SK-N-SH (cell line): ENCODE measurements at regions of chr19 and their contacts with region 1.

Region 1: GRCh38 chr19:44770550-44771257 is 7.0 kb upstream of the CBLC start:
- DNase-seq: peak; percentile 94
- H3K4me3 ChIP-seq: no peak overlapping the region; a peak in 1 of 4 replicates
- H3K27ac ChIP-seq: no peak overlapping the region
- H3K4me1 ChIP-seq: peaks cover 0 to 6% of the 10 kb centered on the region in 2 experiments; a peak in 1 of 4 replicates
- H3K27me3 ChIP-seq: no peaks in the 10 kb centered on the region
- CTCF ChIP-seq: peak; percentile 87
- EP300 ChIP-seq: no peak
- RAD21 ChIP-seq: peak; percentile 94

Region 2: GRCh38 chr19:44683417-44684210 is 87.1 kb before region 1 on chr19:
- CTCF ChIA-PET with region 1: interaction called, 71 read pairs
- POLR2A ChIA-PET with region 1: no interaction called
- DNase-seq: no peak
- H3K4me3 ChIP-seq: no peak overlapping the region
- H3K27ac ChIP-seq: peak overlapping the region in 1 of 2 experiments; percentile 92; a peak in 1 of 4 replicates
- H3K4me1 ChIP-seq: peaks cover 0 to 6% of the 10 kb centered on the region in 2 experiments; a peak in 1 of 4 replicates
- H3K27me3 ChIP-seq: no peaks in the 10 kb centered on the region
- CTCF ChIP-seq: no peak
- EP300 ChIP-seq: no peak
- RAD21 ChIP-seq: no peak

Region 3: DNA sequence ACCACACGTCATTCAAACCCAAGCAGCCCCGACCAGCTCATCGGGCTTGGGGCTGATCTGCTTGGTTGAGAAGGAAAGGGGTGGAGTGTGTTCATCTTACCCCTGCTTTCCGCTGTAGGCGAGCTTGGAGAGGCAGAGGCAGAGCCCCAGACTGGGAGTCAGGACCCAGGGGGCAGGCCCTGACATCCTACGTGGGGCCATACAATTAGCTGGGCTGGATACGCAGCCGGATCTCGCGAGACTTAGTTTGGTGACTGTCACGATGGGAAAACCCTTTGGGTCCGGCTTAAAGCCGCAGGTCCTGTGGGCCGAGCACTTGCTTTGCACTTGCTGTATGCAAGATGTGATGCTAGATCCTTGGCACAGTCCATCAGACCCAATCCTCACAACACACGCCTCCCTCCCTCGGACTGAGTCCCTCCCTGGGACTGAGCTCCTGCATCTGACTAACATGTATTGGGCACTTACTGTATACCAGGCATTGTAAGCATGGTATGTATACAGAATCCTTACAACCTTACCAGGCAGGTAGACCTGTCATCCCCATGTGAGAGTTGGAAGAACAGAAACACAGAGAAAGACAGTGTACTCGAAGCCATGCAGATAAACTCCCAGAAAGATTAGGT is 68.0 kb before region 1 on chr19:
- CTCF ChIA-PET with region 1: interaction called, 13 read pairs
- POLR2A ChIA-PET with region 1: no interaction called
- DNase-seq: peak; percentile 52
- H3K4me3 ChIP-seq: no peak overlapping the region
- H3K27ac ChIP-seq: no peak overlapping the region
- H3K4me1 ChIP-seq: no peaks in the 10 kb centered on the region
- H3K27me3 ChIP-seq: no peaks in the 10 kb centered on the region
- CTCF ChIP-seq: no peak
- EP300 ChIP-seq: no peak
- RAD21 ChIP-seq: no peak

Region 4: GRCh38 chr19:44741841-44742352 is 28.8 kb before region 1 on chr19:
- CTCF ChIA-PET with region 1: interaction called, 24 read pairs
- POLR2A ChIA-PET with region 1: no interaction called
- DNase-seq: peak; percentile 65
- H3K4me3 ChIP-seq: no peak overlapping the region
- H3K27ac ChIP-seq: peak overlapping the region; percentile 36 to 94
- H3K4me1 ChIP-seq: peaks cover 4 to 13% of the 10 kb centered on the region in 2 experiments; a peak in 3 of 4 replicates
- H3K27me3 ChIP-seq: no peaks in the 10 kb centered on the region
- CTCF ChIP-seq: no peak
- EP300 ChIP-seq: peak; percentile 17 to 90; a peak in 3 of 4 replicates
- RAD21 ChIP-seq: no peak

Region 5: GRCh38 chr19:44782729-44783128 is 12.0 kb after region 1 on chr19:
- CTCF ChIA-PET with region 1: interaction called, 74 read pairs
- POLR2A ChIA-PET with region 1: no interaction called
- DNase-seq: no peak
- H3K4me3 ChIP-seq: no peak overlapping the region
- H3K27ac ChIP-seq: no peak overlapping the region
- H3K4me1 ChIP-seq: no peaks in the 10 kb centered on the region
- H3K27me3 ChIP-seq: no peaks in the 10 kb centered on the region
- CTCF ChIP-seq: 0 out of 2 replicates have a peak, but pooled peaks have one; percentile 11
- EP300 ChIP-seq: no peak
- RAD21 ChIP-seq: no peak

Region 6: GRCh38 chr19:44808463-44809371 is 38.0 kb after region 1 on chr19 and contains the start of gene BCAM:
- CTCF ChIA-PET with region 1: interaction called, 13 read pairs
- POLR2A ChIA-PET with region 1: no interaction called
- DNase-seq: peak; percentile 97
- H3K4me3 ChIP-seq: peak within 1 kb of the TSS; percentile 51 to 66
- H3K27ac ChIP-seq: no peak within 1 kb of the TSS
- H3K4me1 ChIP-seq: peaks cover 8 to 13% of the 10 kb centered on the region in 2 experiments; a peak in 2 of 4 replicates
- H3K27me3 ChIP-seq: peaks cover 34% of the 10 kb centered on the region
- CTCF ChIP-seq: no peak
- EP300 ChIP-seq: no peak
- RAD21 ChIP-seq: no peak
- polyA plus RNA-seq, gene BCAM: 9.7 and 34.0 TPM in 2 replicates